CD4-positive, alpha-beta memory T cell (primary cell): ENCODE measurements at regions of chr16 and their contacts with region 1.

Region 1: DNA sequence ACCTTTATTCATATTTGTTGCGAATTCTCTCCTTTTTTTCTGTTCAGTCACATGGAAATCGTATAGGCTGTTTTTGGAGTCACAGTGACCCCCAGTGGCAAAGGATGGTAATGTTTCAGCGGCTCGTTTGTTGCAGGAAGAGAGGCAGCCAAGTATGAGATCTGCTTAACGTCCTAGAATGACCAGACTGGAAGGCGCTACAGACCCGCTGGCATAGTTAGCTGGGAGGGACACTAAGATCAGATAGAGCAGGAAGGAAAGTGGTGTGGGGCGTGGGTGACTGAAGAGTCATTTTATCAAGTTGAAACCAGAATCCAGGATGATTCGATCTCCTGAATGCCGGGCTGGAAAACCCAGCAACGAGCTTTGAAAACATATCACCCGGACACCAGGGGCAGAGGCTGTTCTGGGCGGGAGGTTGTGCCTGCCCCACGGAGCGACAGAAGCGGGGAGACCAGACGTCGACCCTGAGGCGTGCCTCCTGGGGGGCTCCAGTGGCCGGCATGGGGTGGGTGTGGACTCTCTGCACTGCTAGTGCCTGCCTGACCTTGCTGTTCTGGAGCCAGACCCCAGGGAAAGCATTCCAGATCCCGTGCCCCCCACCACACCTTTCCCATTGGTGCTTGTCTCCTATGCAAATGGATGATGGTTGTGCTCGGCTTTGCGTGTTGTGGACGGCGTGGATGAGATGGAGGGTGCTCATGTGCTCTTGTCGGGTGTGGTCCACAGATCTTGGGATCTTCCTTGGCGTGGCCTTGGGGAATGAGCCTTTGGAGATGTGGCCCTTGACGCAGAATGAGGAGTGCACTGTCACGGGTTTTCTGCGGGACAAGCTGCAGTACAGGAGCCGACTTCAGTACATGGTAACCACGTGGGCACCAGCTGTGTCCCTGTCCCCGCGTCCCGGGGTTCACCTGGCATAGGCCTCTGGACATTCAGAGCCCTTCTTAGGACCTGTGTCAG is 7.7 kb downstream of the IL34 start:
- DNase-seq: peak; percentile 66 to 81 (median 73)
- H3K4me3 ChIP-seq: no peak overlapping the region
- H3K4me3 Mint-ChIP-seq: peak overlapping the region in 4 of 8 donors; percentile 47 to 80 (median 68)
- H3K27ac ChIP-seq: no peak overlapping the region
- H3K27ac Mint-ChIP-seq: peak overlapping the region in 3 of 7 donors; percentile 14 to 84 (median 58)
- H3K4me1 ChIP-seq: no peaks in the 10 kb centered on the region
- H3K4me1 Mint-ChIP-seq: peaks cover 0 to 5% (median 4%) of the 10 kb centered on the region in 4 donors
- H3K27me3 ChIP-seq: no peaks in the 10 kb centered on the region
- H3K27me3 Mint-ChIP-seq: peaks cover 0 to 1% of the 10 kb centered on the region in 2 donors

Region 2: DNA sequence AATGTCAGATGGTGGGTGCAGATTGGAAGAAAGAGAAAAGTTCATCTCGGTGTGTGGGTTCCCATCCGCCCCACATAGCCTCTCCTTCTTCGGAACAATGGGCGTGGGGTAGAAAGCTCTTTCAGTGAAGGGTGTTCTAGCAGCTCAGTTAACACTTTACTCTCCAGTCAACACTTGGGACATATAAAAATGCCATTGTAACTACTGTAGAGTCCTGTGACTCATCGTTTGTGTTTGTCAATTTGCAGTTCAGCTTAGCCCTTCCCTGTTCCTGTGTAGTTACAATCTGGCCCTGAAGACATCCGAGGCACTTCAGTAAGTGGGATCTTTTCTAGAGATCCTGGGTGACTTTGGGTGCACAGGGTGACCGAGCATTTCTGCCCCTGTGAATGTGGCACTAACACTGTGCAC is 492.0 kb before region 1 on chr16:
- CTCF ChIA-PET with region 1: interaction called, 6 read pairs
- POLR2A ChIA-PET with region 1: no interaction called
- intact Hi-C with region 1: loop called (anchors 10 kb)
- DNase-seq: no peak
- H3K4me3 ChIP-seq: no peak overlapping the region
- H3K4me3 Mint-ChIP-seq: no peak overlapping the region
- H3K27ac ChIP-seq: no peak overlapping the region
- H3K27ac Mint-ChIP-seq: peak overlapping the region in 3 of 7 donors; percentile 0 to 81 (median 9)
- H3K4me1 ChIP-seq: no peaks in the 10 kb centered on the region
- H3K4me1 Mint-ChIP-seq: peaks cover 3 to 5% (median 4%) of the 10 kb centered on the region in 4 donors
- H3K27me3 ChIP-seq: no peaks in the 10 kb centered on the region
- H3K27me3 Mint-ChIP-seq: no peaks in the 10 kb centered on the region

Region 3: GRCh38 chr16:70331588-70332358 is 322.3 kb before region 1 on chr16:
- CTCF ChIA-PET with region 1: interaction called, 8 read pairs
- POLR2A ChIA-PET with region 1: no interaction called
- intact Hi-C with region 1: loop called (anchors 1 kb)
- DNase-seq: no peak
- H3K4me3 ChIP-seq: no peak overlapping the region
- H3K4me3 Mint-ChIP-seq: no peak overlapping the region
- H3K27ac ChIP-seq: no peak overlapping the region
- H3K27ac Mint-ChIP-seq: peak overlapping the region in 2 of 7 donors; percentile 23 to 42
- H3K4me1 ChIP-seq: no peaks in the 10 kb centered on the region
- H3K4me1 Mint-ChIP-seq: no peaks in the 10 kb centered on the region
- H3K27me3 ChIP-seq: no peaks in the 10 kb centered on the region
- H3K27me3 Mint-ChIP-seq: no peaks in the 10 kb centered on the region

Region 4: DNA sequence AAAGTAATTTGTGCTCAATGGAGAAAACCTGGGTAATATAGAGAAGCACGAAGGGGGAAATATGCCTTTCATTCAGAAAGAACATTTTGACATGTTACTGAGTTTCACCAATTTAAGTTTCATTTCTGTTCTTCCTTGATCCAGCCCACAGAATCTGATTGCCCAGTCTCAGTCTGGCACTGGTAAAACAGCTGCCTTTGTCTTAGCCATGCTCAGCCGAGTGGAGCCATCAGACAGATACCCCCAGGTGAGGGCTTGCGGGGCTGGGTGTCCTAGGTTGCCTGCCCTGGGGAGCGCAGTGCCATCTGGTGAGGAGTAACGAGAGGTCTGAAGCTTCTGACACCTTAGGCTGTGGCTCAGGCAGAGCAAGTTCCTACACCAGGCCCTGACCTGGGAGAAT is 289.7 kb before region 1 on chr16:
- CTCF ChIA-PET with region 1: interaction called, 10 read pairs
- POLR2A ChIA-PET with region 1: no interaction called
- intact Hi-C with region 1: no loop called
- DNase-seq: no peak
- H3K4me3 ChIP-seq: no peak overlapping the region
- H3K4me3 Mint-ChIP-seq: no peak overlapping the region
- H3K27ac ChIP-seq: no peak overlapping the region
- H3K27ac Mint-ChIP-seq: peak overlapping the region in 1 of 7 donors; percentile 30
- H3K4me1 ChIP-seq: no peaks in the 10 kb centered on the region
- H3K4me1 Mint-ChIP-seq: peaks cover 0 to 1% (median 0%) of the 10 kb centered on the region in 4 donors
- H3K27me3 ChIP-seq: no peaks in the 10 kb centered on the region
- H3K27me3 Mint-ChIP-seq: no peaks in the 10 kb centered on the region

Region 5: GRCh38 chr16:70372921-70373728 is 281.0 kb before region 1 on chr16:
- CTCF ChIA-PET with region 1: interaction called, 10 read pairs
- POLR2A ChIA-PET with region 1: no interaction called
- intact Hi-C with region 1: no loop called
- DNase-seq: no peak
- H3K4me3 ChIP-seq: no peak overlapping the region
- H3K4me3 Mint-ChIP-seq: no peak overlapping the region
- H3K27ac ChIP-seq: no peak overlapping the region
- H3K27ac Mint-ChIP-seq: peak overlapping the region in 4 of 7 donors; percentile 27 to 47 (median 34)
- H3K4me1 ChIP-seq: peaks cover 4% of the 10 kb centered on the region
- H3K4me1 Mint-ChIP-seq: peaks cover 4 to 11% (median 9%) of the 10 kb centered on the region in 4 donors
- H3K27me3 ChIP-seq: no peaks in the 10 kb centered on the region
- H3K27me3 Mint-ChIP-seq: no peaks in the 10 kb centered on the region

Region 6: GRCh38 chr16:70523076-70523742 is 130.9 kb before region 1 on chr16 and contains the start of gene COG4:
- CTCF ChIA-PET with region 1: no interaction called
- POLR2A ChIA-PET with region 1: no interaction called
- intact Hi-C with region 1: loop called (anchors 5 kb)
- DNase-seq: peak; percentile 90 to 94 (median 91)
- H3K4me3 ChIP-seq: peak within 1 kb of the TSS; percentile 90 to 97
- H3K4me3 Mint-ChIP-seq: peak within 1 kb of the TSS; percentile 96 to 99 (median 98)
- H3K27ac ChIP-seq: peak within 1 kb of the TSS; percentile 86
- H3K27ac Mint-ChIP-seq: peak within 1 kb of the TSS; percentile 97 to 100 (median 99)
- H3K4me1 ChIP-seq: peaks cover 64% of the 10 kb centered on the region
- H3K4me1 Mint-ChIP-seq: peaks cover 35 to 75% (median 54%) of the 10 kb centered on the region in 4 donors
- H3K27me3 ChIP-seq: no peaks in the 10 kb centered on the region
- H3K27me3 Mint-ChIP-seq: no peaks in the 10 kb centered on the region
- total RNA-seq, gene COG4: 66.5 to 68.9 TPM

Region 7: GRCh38 chr16:70770626-70771552 is 116.8 kb after region 1 on chr16:
- CTCF ChIA-PET with region 1: interaction called, 8 read pairs
- POLR2A ChIA-PET with region 1: no interaction called
- intact Hi-C with region 1: loop called (anchors 10 kb)
- DNase-seq: peak in 4 of 5 donors; percentile 16 to 40 (median 22)
- H3K4me3 ChIP-seq: no peak overlapping the region
- H3K4me3 Mint-ChIP-seq: no peak overlapping the region
- H3K27ac ChIP-seq: no peak overlapping the region
- H3K27ac Mint-ChIP-seq: peak overlapping the region in 1 of 7 donors; percentile 19
- H3K4me1 ChIP-seq: no peaks in the 10 kb centered on the region
- H3K4me1 Mint-ChIP-seq: no peaks in the 10 kb centered on the region
- H3K27me3 ChIP-seq: no peaks in the 10 kb centered on the region
- H3K27me3 Mint-ChIP-seq: no peaks in the 10 kb centered on the region